Panc1 (cell line): ENCODE measurements at regions of chr5 and their contacts with region 1.

Region 1: DNA sequence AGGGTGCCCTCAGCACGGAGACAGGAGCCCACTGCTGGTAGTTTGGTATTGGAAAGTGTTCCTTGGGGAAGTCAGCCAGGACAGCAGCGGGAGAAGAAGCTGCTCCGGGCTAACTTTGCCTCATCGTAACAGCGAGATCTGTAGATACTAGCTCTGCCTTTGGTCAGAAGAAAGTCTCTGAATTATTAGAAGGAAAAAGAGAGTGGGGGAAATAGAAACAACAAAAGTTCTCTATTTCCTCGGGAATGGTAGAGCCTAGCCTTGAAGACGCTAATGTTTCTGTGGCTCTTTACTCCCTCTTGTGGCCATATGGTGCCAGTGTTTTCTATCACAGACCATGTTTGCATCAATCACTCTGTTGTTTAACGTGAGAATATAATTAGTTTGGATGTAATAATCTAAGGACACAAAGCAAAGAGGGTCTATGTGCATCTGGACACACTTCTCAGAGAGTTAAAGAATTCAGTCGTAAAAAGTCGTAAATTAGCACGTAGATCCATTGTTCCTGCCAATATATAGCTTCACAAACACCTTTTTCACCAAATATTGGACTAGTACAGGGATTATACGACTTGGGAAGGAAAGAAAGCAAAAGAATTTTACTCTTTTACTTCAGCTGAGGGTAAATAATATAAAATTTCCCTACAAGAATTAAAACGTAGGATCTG is 40.2 kb upstream of the HSD17B4 start:
- DNase-seq: peak; percentile 81
- ATAC-seq: peak; percentile 98
- H3K4me3 ChIP-seq: peak overlapping the region; percentile 52 to 53
- H3K27ac ChIP-seq: peak overlapping the region; percentile 62; the same call in 1 of the 2 replicates
- H3K4me1 ChIP-seq: peaks cover 5% of the 10 kb centered on the region; the same call in 1 of the 2 replicates
- H3K27me3 ChIP-seq: no peaks in the 10 kb centered on the region; the same call in 1 of the 2 replicates
- CTCF ChIP-seq: peak; percentile 88

Region 2: GRCh38 chr5:119022017-119022745 is 389.9 kb before region 1 on chr5:
- CTCF ChIA-PET with region 1: interaction called, 6 read pairs
- POLR2A ChIA-PET with region 1: no interaction called
- in situ Hi-C with region 1: no loop called
- intact Hi-C with region 1: loop called (anchors 2 kb)
- DNase-seq: peak; percentile 30
- ATAC-seq: peak; percentile 60; the same call in 1 of the 2 replicates
- H3K4me3 ChIP-seq: no peak overlapping the region
- H3K27ac ChIP-seq: no peak overlapping the region
- H3K4me1 ChIP-seq: no peaks in the 10 kb centered on the region
- H3K27me3 ChIP-seq: no peaks in the 10 kb centered on the region
- CTCF ChIP-seq: peak; percentile 42; the same call in 1 of the 2 replicates